Right cardiac atrium (tissue), 5 donors: ENCODE measurements at regions of chr1 and their contacts with region 1.

Region 1: DNA sequence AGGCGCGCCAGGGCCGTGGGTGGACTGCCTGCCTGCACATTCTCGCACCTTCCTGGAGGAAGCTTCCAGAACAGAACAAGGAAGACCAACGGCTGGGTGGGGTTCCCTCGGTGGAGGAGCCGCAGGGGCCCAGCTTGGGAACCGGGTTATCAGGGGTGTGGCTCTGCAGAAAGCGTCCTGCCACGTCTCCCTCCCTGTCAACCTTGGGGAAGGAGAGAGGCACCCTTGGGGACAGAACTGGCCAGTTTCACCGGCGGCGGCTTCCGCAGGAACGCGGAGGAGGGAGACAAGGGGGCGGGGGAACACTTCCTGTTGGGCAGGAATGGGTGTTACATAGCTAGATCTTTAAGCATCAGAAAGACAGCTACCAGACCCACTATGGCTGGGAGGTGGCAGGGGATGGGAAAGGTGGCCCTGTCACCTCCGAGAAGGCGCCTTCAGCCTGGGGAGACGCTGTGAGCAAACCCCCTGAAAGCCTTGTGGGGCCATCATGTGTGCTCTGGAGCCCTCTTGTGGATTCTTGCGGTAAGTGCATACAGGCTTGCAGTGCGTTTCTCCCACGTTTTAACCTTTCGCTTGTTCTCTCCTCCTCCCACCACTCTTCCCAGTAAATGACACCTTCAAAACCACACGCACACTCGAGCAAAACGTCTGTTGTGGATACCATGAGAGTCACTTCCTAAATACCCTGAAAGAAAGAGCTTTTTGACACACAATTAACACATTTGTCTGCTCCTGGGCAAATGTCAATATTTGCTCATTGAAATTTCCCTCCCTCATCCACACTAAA is 3.8 kb upstream of the PLEKHA6 start:
- DNase-seq: peak; percentile 77 to 89 (median 88)
- ATAC-seq: peak; percentile 67 to 77
- H3K4me3 ChIP-seq: peak overlapping the region; percentile 14
- H3K27ac ChIP-seq: no peak overlapping the region
- H3K4me1 ChIP-seq: peaks cover 7% of the 10 kb centered on the region
- H3K27me3 ChIP-seq: no peaks in the 10 kb centered on the region

Region 2: GRCh38 chr1:203649999-203650855 is 713.3 kb before region 1 on chr1:
- intact Hi-C with region 1: no loop called
- DNase-seq: peak; percentile 56 to 85 (median 85)
- ATAC-seq: peak; percentile 86 to 89
- H3K4me3 ChIP-seq: peak overlapping the region; percentile 26
- H3K27ac ChIP-seq: peak overlapping the region; percentile 14
- H3K4me1 ChIP-seq: peaks cover 17% of the 10 kb centered on the region
- H3K27me3 ChIP-seq: no peaks in the 10 kb centered on the region

Region 3: GRCh38 chr1:204162231-204163074 is 201.1 kb before region 1 on chr1:
- intact Hi-C with region 1: loop called (anchors 2 to 5 kb)
- DNase-seq: peak; percentile 81 to 93 (median 92)
- ATAC-seq: peak; percentile 84 to 88
- H3K4me3 ChIP-seq: no peak overlapping the region
- H3K27ac ChIP-seq: no peak overlapping the region
- H3K4me1 ChIP-seq: no peaks in the 10 kb centered on the region
- H3K27me3 ChIP-seq: no peaks in the 10 kb centered on the region

Region 4: DNA sequence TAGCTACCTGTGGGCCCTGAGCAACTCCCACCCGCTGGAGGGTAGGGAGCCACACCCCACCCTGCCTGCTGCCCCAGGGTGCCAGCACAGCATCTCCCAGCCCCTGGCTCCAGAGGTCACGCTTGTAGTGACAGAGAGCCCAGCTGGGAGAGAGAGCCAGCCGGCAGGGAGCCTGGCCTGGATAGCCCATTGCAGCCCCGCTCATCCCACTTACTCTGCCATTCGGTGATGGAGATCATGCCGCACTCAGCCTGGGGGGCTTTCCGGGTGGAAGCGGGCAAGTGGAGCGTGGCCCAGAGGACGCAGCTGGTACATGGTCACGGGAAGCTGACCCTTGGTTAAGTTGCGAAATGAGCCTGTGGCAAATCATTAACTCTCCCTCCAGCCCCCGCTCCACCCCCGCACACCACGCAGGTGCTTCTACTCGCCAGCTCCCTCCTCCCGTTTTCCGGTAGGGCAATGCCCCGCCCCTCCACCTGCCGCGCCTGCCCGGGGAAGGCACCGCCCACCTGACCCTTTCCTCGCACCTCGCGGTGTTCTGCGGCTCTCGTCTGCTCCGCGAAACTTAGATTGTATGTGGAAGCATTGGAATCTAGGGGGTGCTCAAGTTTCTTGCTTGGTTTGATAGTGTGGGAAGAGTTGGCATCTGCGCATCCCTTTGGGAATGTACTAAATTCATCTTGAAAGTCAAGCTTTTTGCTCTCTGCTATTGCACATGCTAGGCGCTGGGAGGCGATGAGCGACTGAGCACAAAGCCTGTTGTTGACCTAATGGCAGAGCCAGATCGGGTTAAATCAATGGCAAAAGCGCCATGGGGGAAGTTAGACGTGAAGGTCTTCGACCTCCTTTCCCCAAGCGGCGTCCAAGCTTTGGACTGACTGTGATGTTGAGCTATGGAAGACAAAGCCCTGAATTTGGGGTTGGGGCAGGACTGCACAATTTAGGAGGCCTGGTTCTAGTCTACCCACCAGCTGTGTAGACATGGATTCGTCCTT is 149.6 kb before region 1 on chr1 and contains the start of gene GOLT1A:
- intact Hi-C with region 1: loop called (anchors 2 to 5 kb)
- DNase-seq: peak; percentile 71 to 86 (median 82)
- ATAC-seq: peak; percentile 71 to 78
- H3K4me3 ChIP-seq: no peak within 1 kb of the TSS
- H3K27ac ChIP-seq: no peak within 1 kb of the TSS
- H3K4me1 ChIP-seq: no peaks in the 10 kb centered on the region
- H3K27me3 ChIP-seq: no peaks in the 10 kb centered on the region
- total RNA-seq, gene GOLT1A: not detected

Region 5: DNA sequence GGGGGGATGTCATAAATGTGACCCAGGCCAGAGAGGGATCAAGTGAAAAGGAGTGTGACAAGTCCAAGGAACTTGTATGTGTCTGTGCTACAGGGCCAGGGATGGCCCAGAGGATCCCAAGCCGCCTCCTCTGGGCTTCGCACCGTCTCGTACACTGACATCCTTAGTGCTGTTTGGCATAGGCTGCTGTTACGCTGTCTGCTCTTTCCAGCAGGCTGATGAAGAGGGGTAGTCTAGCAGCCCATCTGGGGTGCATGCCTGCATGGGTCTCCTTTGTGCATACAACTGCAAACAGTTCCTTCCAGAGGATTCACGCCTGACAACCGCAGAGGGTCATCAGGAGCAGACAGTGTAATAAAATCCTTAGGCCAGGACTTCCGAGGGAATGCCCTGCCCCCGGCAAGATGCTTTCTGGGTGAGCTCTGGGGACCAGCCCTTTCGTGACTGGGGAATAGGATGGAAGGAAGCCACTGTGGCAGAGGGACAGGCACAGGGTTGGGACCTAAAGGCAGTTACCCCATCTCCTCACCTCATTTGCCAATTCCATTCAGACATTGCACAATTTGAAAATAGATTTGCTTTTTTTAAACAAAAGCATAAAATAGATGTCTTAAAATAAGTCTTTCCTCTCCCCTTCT is 143.4 kb before region 1 on chr1:
- intact Hi-C with region 1: loop called in 3 of 4 experiments (anchors 2 to 5 kb)
- DNase-seq: no peak
- ATAC-seq: peak in 1 of 2 donors; percentile 7
- H3K4me3 ChIP-seq: no peak overlapping the region
- H3K27ac ChIP-seq: no peak overlapping the region
- H3K4me1 ChIP-seq: no peaks in the 10 kb centered on the region
- H3K27me3 ChIP-seq: no peaks in the 10 kb centered on the region

Region 6: GRCh38 chr1:204257954-204258752 is 105.4 kb before region 1 on chr1:
- intact Hi-C with region 1: loop called (anchors 5 kb)
- DNase-seq: peak; percentile 61 to 81 (median 78)
- ATAC-seq: peak; percentile 41 to 64
- H3K4me3 ChIP-seq: no peak overlapping the region
- H3K27ac ChIP-seq: no peak overlapping the region
- H3K4me1 ChIP-seq: peaks cover 2% of the 10 kb centered on the region
- H3K27me3 ChIP-seq: no peaks in the 10 kb centered on the region

Region 7: GRCh38 chr1:204296431-204296988 is 67.0 kb before region 1 on chr1:
- intact Hi-C with region 1: loop called in 1 of 4 experiments (anchors 10 kb)
- DNase-seq: peak in 2 of 3 donors; percentile 68 to 72
- ATAC-seq: peak in 1 of 2 donors; percentile 35
- H3K4me3 ChIP-seq: no peak overlapping the region
- H3K27ac ChIP-seq: peak overlapping the region; percentile 80
- H3K4me1 ChIP-seq: peaks cover 23% of the 10 kb centered on the region
- H3K27me3 ChIP-seq: no peaks in the 10 kb centered on the region

Region 8: DNA sequence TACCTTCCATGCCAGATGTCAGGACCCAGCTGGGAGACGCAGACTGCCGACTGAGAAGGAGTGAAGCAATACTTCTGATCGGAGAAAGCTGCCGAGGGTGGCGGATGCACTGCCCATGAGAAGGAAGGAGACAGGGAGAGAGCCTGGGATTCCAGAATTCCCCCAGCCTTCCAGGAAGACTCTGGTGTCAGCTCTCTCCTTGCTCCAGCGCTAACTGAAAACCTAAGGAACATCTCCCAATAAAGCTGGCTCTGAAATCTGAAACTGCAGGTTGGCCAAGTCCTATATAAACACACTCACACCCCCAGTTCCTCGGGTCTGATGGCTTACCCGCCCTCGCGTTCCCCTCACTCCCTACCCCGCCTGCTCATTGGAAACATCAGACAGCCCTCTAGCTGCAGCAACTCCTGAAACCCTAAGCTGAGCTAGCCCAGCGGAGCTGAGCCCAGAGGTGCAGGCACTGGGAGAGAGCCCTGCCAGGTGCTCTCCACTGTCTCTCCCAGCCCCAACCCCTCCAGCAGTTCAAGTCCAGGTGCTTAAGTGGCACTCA is 56.1 kb before region 1 on chr1:
- intact Hi-C with region 1: loop called in 1 of 4 experiments (anchors 5 kb)
- DNase-seq: peak; percentile 43 to 73 (median 65)
- ATAC-seq: peak; percentile 79 to 86
- H3K4me3 ChIP-seq: peak overlapping the region; percentile 1
- H3K27ac ChIP-seq: no peak overlapping the region
- H3K4me1 ChIP-seq: peaks cover 3% of the 10 kb centered on the region
- H3K27me3 ChIP-seq: no peaks in the 10 kb centered on the region